ENCODE measurements at regions of chr11 and their contacts with region 1.

Region 1: GRCh38 chr11:17230867-17231851 is 23.4 kb upstream of the PIK3C2A start:
- DNase-seq: peak in 8 of 9 donors; percentile 20 to 62 (median 36)
- ATAC-seq: peak; percentile 79
- H3K4me3 ChIP-seq: no peak overlapping the region
- H3K4me3 Mint-ChIP-seq: peak overlapping the region in 6 of 10 donors; percentile 2 to 55 (median 26)
- H3K27ac ChIP-seq: no peak overlapping the region
- H3K27ac Mint-ChIP-seq: peak overlapping the region in 4 of 9 donors; percentile 14 to 90 (median 60)
- H3K4me1 ChIP-seq: peaks cover 3 to 7% of the 10 kb centered on the region in 2 donors
- H3K4me1 Mint-ChIP-seq: peaks cover 7 to 19% (median 14%) of the 10 kb centered on the region in 7 donors
- H3K27me3 ChIP-seq: no peaks in the 10 kb centered on the region
- H3K27me3 Mint-ChIP-seq: peaks cover 0 to 27% (median 0%) of the 10 kb centered on the region in 5 donors

Region 2: DNA sequence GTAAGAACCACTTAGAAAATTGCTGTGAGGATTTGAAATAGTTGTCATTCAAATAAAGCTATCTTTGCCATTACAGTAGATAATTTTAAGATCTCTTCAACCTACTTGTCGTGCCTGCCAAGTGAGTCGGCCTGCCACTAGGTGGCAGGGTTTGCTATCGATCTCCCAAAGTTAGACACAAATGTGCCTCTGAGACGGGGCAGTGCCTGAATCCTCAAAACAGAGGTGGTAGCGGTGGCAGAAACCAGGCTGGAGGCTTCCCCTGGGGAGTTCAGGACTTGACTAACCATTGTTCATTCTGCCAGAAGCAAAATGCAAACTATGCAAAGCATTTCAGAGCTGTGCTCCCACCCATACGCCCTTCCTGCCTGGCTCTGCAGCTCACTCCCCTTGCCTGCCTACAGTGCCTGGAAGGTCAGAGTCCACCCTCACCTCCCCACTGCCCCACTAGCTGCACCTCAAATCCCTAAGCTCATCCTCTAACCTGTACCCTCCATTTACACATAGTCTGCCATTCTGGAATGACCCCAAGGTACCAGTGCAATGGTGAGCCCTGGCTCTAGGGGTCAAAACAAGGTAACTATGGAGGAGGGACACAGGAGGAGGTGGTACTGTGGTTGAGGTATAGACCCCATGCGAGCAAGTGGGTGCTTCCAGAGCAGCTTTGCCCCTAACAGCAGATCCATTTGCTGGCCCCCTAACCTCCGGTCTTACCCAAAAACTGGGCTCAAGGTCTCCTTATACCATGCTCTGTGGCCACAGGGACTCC is 410.7 kb before region 1 on chr11:
- CTCF ChIA-PET with region 1: no interaction called
- POLR2A ChIA-PET with region 1: no interaction called
- intact Hi-C with region 1: loop called in 1 of 2 experiments (anchors 2 kb)
- DNase-seq: peak in 6 of 9 donors; percentile 6 to 30 (median 21)
- ATAC-seq: peak; percentile 64
- H3K4me3 ChIP-seq: no peak overlapping the region
- H3K4me3 Mint-ChIP-seq: no peak overlapping the region
- H3K27ac ChIP-seq: no peak overlapping the region
- H3K27ac Mint-ChIP-seq: no peak overlapping the region
- H3K4me1 ChIP-seq: no peaks in the 10 kb centered on the region
- H3K4me1 Mint-ChIP-seq: peaks cover 0 to 8% (median 0%) of the 10 kb centered on the region in 7 donors
- H3K27me3 ChIP-seq: no peaks in the 10 kb centered on the region
- H3K27me3 Mint-ChIP-seq: peaks cover 0 to 5% (median 0%) of the 10 kb centered on the region in 5 donors

Region 3: GRCh38 chr11:17244046-17244445 is 12.9 kb after region 1 on chr11:
- CTCF ChIA-PET with region 1: no interaction called
- POLR2A ChIA-PET with region 1: no interaction called
- intact Hi-C with region 1: no loop called
- DNase-seq: no peak
- ATAC-seq: no peak
- H3K4me3 ChIP-seq: no peak overlapping the region
- H3K4me3 Mint-ChIP-seq: peak overlapping the region in 1 of 10 donors; percentile 3
- H3K27ac ChIP-seq: no peak overlapping the region
- H3K27ac Mint-ChIP-seq: no peak overlapping the region
- H3K4me1 ChIP-seq: no peaks in the 10 kb centered on the region
- H3K4me1 Mint-ChIP-seq: peaks cover 0 to 14% (median 5%) of the 10 kb centered on the region in 7 donors
- H3K27me3 ChIP-seq: no peaks in the 10 kb centered on the region
- H3K27me3 Mint-ChIP-seq: peaks cover 0 to 48% (median 0%) of the 10 kb centered on the region in 5 donors

Region 4: DNA sequence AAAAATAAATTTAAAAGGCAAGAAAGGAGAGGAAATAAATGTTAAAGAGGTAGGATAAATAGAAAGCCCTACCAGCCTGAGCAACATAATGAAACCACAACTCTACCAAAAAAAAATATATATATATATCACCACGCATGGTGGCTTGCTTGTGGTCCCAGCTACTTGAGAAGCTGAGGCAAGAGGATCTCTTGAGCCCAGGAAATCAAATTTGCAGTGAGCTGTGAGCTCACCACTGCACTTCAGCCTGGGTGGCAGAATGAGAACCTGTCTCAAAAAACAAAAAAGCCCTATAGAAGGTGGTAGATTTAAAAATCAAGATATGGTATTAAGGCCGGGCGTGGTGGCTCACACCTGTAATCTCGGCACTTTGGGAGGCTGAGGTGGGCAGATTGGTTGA is 55.9 kb after region 1 on chr11:
- CTCF ChIA-PET with region 1: interaction called, 4 read pairs
- POLR2A ChIA-PET with region 1: interaction called, 7 read pairs
- intact Hi-C with region 1: loop called in 1 of 2 experiments (anchors 2 kb)
- DNase-seq: peak in 1 of 9 donors; percentile 7
- ATAC-seq: no peak
- H3K4me3 ChIP-seq: no peak overlapping the region
- H3K4me3 Mint-ChIP-seq: peak overlapping the region in 9 of 10 donors; percentile 11 to 69 (median 51)
- H3K27ac ChIP-seq: peak overlapping the region; percentile 63
- H3K27ac Mint-ChIP-seq: peak overlapping the region; percentile 52 to 94 (median 88)
- H3K4me1 ChIP-seq: peaks cover 37 to 39% of the 10 kb centered on the region in 2 donors
- H3K4me1 Mint-ChIP-seq: peaks cover 33 to 73% (median 56%) of the 10 kb centered on the region in 7 donors
- H3K27me3 ChIP-seq: no peaks in the 10 kb centered on the region
- H3K27me3 Mint-ChIP-seq: no peaks in the 10 kb centered on the region

Region 5: GRCh38 chr11:17333799-17334586 is 102.8 kb after region 1 on chr11:
- CTCF ChIA-PET with region 1: interaction called, 3 read pairs
- POLR2A ChIA-PET with region 1: no interaction called
- intact Hi-C with region 1: loop called in 1 of 2 experiments (anchors 5 kb)
- DNase-seq: peak in 6 of 9 donors; percentile 2 to 39 (median 29)
- ATAC-seq: peak; percentile 70
- H3K4me3 ChIP-seq: no peak overlapping the region
- H3K4me3 Mint-ChIP-seq: peak overlapping the region in 1 of 10 donors; percentile 2
- H3K27ac ChIP-seq: peak overlapping the region; percentile 26
- H3K27ac Mint-ChIP-seq: peak overlapping the region in 8 of 9 donors; percentile 14 to 83 (median 64)
- H3K4me1 ChIP-seq: peaks cover 14% of the 10 kb centered on the region in 2 donors
- H3K4me1 Mint-ChIP-seq: peaks cover 0 to 24% (median 19%) of the 10 kb centered on the region in 7 donors
- H3K27me3 ChIP-seq: no peaks in the 10 kb centered on the region
- H3K27me3 Mint-ChIP-seq: no peaks in the 10 kb centered on the region

Region 6: DNA sequence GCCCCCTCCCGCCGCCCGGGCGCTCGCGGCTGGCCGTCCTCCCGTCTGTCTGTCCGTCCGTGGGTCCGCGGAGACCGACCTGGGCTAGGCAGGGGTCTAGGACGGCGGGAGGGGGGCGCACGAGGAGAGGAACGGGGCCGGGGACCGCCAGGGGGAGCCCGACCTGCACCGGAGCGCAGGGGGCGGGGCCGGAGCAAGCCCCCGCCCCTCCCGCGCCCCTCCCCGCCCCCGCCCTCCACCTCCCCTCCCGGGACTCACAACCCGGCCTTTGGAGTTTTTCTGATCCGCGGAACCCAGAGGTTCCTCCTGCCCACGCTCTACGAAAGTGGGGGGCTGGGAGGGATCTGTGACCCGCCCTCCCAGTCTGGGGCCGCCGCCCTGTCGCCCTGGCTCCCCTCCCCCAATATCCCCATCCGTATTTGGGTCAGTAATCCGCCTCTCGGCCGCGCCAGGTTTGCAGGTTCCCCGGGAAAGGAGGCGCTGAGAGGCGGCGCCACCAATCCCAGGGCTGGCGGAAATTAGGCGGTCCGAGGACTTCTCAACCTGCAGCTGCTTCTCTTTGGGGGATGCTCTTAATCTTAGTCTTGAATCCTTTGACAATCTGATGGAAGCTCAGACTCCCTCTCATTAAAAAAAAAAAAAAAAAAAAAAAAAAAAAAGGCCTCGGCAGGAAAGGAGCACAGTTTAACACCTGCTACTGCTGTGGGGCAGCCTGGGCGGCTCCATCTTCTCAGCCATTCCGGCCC is 158.2 kb after region 1 on chr11:
- CTCF ChIA-PET with region 1: interaction called, 5 read pairs
- POLR2A ChIA-PET with region 1: no interaction called
- intact Hi-C with region 1: loop called (anchors 1 kb)
- DNase-seq: peak; percentile 57 to 87 (median 80)
- ATAC-seq: peak; percentile 96
- H3K4me3 ChIP-seq: peak overlapping the region; percentile 62
- H3K4me3 Mint-ChIP-seq: peak overlapping the region; percentile 77 to 90 (median 83)
- H3K27ac ChIP-seq: peak overlapping the region; percentile 66
- H3K27ac Mint-ChIP-seq: peak overlapping the region in 7 of 9 donors; percentile 12 to 84 (median 55)
- H3K4me1 ChIP-seq: peaks cover 0 to 4% of the 10 kb centered on the region in 2 donors
- H3K4me1 Mint-ChIP-seq: peaks cover 0 to 9% (median 5%) of the 10 kb centered on the region in 7 donors
- H3K27me3 ChIP-seq: no peaks in the 10 kb centered on the region
- H3K27me3 Mint-ChIP-seq: peaks cover 0 to 16% (median 0%) of the 10 kb centered on the region in 5 donors

Region 7: DNA sequence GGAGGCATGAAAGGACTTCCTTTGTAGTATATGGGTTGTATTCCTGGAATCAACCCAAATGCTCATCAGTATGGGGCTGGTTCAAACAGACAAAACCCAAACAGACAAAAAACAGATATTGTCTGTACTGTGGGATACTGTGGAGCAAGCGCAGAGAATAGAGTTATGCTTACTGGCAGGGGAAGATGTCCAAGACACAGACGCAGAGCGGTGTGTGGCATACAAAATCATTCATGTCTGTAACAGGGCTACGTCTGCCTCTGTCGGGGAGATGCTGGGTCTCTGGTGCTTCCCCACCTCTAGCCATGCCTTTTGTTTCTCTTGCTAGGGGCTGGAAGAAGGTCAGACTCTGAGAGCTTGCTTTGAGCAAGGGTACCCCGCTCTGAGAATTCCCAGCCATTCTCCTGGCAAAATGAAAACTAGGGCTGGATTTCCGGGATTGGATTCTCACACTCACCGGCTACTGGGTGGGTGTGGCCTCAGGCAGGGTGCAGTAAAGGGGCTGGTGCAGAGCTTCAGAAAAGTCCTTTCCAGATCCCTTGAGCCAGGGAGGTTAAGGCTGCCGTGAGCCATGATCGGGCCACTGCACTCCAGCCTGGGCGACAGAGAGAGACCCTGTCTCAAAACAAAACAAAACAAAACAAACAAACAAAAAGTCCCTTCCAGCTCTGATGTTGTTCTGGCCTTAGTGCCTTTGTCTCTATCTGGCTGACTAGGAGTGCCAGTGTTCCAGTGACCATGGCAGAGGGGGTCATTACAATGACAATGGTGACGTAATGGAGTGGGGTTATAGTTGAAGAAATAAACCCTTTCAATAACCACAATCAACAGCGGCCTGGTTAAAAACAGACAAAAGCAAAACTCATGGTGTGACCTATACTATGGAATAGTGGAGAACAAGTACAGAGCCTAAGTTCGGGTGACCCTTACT is 248.4 kb after region 1 on chr11:
- CTCF ChIA-PET with region 1: no interaction called
- POLR2A ChIA-PET with region 1: no interaction called
- intact Hi-C with region 1: no loop called
- DNase-seq: no peak
- ATAC-seq: no peak
- H3K4me3 ChIP-seq: no peak overlapping the region
- H3K4me3 Mint-ChIP-seq: no peak overlapping the region
- H3K27ac ChIP-seq: no peak overlapping the region
- H3K27ac Mint-ChIP-seq: no peak overlapping the region
- H3K4me1 ChIP-seq: no peaks in the 10 kb centered on the region
- H3K4me1 Mint-ChIP-seq: peaks cover 0 to 9% (median 3%) of the 10 kb centered on the region in 7 donors
- H3K27me3 ChIP-seq: no peaks in the 10 kb centered on the region
- H3K27me3 Mint-ChIP-seq: peaks cover 40 to 61% (median 44%) of the 10 kb centered on the region in 5 donors

Region 8: GRCh38 chr11:17544181-17544622 is 313.0 kb after region 1 on chr11 and contains the start of gene USH1C:
- CTCF ChIA-PET with region 1: interaction called, 5 read pairs
- POLR2A ChIA-PET with region 1: no interaction called
- intact Hi-C with region 1: loop called in 1 of 2 experiments (anchors 1 kb)
- DNase-seq: peak in 1 of 9 donors; percentile 60
- ATAC-seq: no peak
- H3K4me3 ChIP-seq: no peak within 1 kb of the TSS
- H3K4me3 Mint-ChIP-seq: peak within 1 kb of the TSS in 7 of 10 donors; percentile 12 to 59 (median 45)
- H3K27ac ChIP-seq: no peak within 1 kb of the TSS
- H3K27ac Mint-ChIP-seq: no peak within 1 kb of the TSS
- H3K4me1 ChIP-seq: no peaks in the 10 kb centered on the region
- H3K4me1 Mint-ChIP-seq: peaks cover 0 to 15% (median 2%) of the 10 kb centered on the region in 7 donors
- H3K27me3 ChIP-seq: no peaks in the 10 kb centered on the region
- H3K27me3 Mint-ChIP-seq: peaks cover 34 to 55% (median 42%) of the 10 kb centered on the region in 5 donors
- total RNA-seq, gene USH1C: not detected